ENCODE measurements at regions of chr17 and their contacts with region 1.

Region 1: DNA sequence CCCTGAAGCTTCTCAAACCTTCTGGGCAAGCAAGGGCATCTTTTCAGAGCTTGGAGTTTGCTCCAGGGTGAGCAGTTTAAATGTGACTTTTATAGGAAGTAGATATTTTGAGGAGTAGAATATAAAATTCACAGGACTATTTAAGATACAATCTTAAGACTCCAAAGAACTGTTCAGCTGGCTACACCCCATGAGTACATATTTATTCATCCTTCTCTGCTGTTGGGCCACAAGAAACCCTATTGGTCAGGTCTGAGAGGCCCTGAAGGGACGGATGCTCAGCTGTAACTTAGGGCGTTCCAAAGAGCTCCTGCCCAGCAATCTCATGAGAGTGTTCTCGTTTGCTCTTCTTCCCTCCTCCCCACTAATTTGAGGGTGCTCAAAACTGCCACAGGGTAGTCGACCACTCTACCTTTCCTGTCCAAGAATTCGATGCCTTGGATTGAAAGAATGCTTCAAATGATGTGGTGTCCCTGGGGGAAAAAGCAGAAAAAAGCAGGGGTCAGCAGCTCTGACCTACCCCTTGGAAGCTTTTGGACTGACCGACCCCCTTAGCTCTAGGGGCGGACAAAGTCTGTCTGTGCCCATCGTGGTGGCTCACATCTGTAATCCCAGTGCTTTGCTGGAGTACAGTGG is 7.2 kb downstream of the ST6GALNAC2 start:
- DNase-seq: no peak
- H3K4me3 Mint-ChIP-seq: no peak overlapping the region
- H3K27ac Mint-ChIP-seq: no peak overlapping the region
- H3K4me1 Mint-ChIP-seq: peaks cover 14% of the 10 kb centered on the region
- H3K27me3 Mint-ChIP-seq: no peaks in the 10 kb centered on the region
- CTCF ChIP-seq: no peak

Region 2: GRCh38 chr17:76562734-76563148 is 15.7 kb before region 1 on chr17:
- CTCF ChIA-PET with region 1: interaction called, 4 read pairs
- POLR2A ChIA-PET with region 1: interaction called, 171 read pairs
- intact Hi-C with region 1: no loop called
- DNase-seq: peak; percentile 91
- H3K4me3 Mint-ChIP-seq: peak overlapping the region; percentile 92
- H3K27ac Mint-ChIP-seq: no peak overlapping the region
- H3K4me1 Mint-ChIP-seq: peaks cover 40% of the 10 kb centered on the region
- H3K27me3 Mint-ChIP-seq: no peaks in the 10 kb centered on the region
- CTCF ChIP-seq: no peak

Region 3: DNA sequence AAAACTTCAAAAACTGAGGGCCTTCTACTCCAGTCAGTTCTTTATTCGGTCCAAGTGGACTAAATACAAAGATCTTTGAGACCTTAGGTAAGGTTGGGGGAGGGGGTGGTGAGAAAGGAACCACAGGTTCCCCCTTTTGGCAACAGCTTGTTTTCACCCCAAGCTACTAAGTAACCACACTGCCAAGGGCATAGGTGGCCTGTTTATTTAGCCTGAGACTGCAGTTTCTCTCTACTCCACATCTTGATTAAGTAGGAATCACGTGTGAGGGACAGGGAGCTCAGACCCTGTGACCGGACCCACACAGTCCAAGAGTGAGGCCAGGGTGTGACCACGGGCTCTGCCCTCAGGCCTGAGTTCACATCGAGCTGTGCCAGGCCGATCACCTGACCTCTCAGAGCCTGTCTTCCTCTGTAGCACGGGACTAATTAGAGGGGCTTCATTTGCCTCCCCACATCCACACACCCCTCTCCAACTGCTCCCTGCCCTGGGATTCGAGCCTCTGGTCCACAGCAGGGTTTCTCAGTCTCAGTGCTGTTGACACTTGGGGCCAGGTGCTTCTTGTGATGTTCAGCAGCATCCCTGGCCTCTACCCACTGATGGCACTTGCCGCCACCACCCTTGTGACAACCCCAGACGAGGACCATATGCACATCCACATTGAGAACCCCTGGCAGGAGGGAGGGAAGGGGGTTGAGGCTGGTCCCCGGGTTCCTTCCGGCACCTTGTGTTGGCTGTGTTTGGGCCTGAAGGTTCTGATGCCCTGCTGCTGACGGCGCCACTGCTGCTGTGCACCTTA is 10.6 kb before region 1 on chr17:
- CTCF ChIA-PET with region 1: interaction called, 4 read pairs
- POLR2A ChIA-PET with region 1: interaction called, 171 read pairs
- intact Hi-C with region 1: no loop called
- DNase-seq: peak; percentile 35
- H3K4me3 Mint-ChIP-seq: no peak overlapping the region
- H3K27ac Mint-ChIP-seq: peak overlapping the region; percentile 50
- H3K4me1 Mint-ChIP-seq: peaks cover 27% of the 10 kb centered on the region
- H3K27me3 Mint-ChIP-seq: no peaks in the 10 kb centered on the region
- CTCF ChIP-seq: no peak

Region 4: DNA sequence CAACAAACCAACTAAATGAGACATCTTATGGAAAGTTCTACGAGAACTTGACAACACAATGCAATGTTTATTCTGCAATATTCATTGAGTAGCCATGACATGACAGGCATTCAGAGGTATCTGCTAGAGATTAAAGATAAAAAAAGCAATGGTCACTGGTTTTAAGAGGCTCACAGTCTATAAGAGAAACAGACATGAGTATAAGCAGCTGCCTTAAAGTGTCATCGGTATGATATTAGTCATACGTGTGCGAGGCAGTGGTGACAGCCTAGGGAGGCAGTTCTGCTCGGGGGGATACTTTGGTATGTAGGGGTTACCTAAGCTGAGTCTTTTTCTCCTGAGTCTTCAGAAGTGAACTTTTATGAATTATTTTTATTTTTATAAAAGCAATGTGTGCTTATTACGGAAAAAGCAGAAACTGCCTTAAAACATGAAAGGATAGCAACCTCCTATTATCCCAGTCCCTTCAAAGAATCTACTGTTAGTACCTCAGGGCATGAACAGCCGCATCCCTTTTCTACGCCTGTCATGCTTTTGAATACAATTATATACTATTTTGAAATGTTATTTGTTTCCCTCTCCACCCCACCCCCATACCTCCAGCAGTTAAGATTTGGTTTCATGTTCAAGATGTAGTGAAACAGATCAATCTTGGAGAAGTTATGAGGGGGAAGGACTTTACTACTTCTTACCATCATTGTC is 57.3 kb after region 1 on chr17:
- CTCF ChIA-PET with region 1: no interaction called
- POLR2A ChIA-PET with region 1: no interaction called
- intact Hi-C with region 1: no loop called
- DNase-seq: no peak
- H3K4me3 Mint-ChIP-seq: no peak overlapping the region
- H3K27ac Mint-ChIP-seq: no peak overlapping the region
- H3K4me1 Mint-ChIP-seq: peaks cover 1% of the 10 kb centered on the region
- H3K27me3 Mint-ChIP-seq: no peaks in the 10 kb centered on the region
- CTCF ChIP-seq: no peak

Region 5: GRCh38 chr17:76805319-76805718 is 226.9 kb after region 1 on chr17:
- CTCF ChIA-PET with region 1: no interaction called
- POLR2A ChIA-PET with region 1: no interaction called
- intact Hi-C with region 1: no loop called
- DNase-seq: peak; percentile 22
- H3K4me3 Mint-ChIP-seq: no peak overlapping the region
- H3K27ac Mint-ChIP-seq: no peak overlapping the region
- H3K4me1 Mint-ChIP-seq: no peaks in the 10 kb centered on the region
- H3K27me3 Mint-ChIP-seq: no peaks in the 10 kb centered on the region
- CTCF ChIP-seq: no peak